Activated CD8-positive, alpha-beta T cell treated with anti-CD3 and anti-CD28 coated beads for 36 hours (primary cell): ENCODE measurements at regions of chr11 and their contacts with region 1.

Region 1: DNA sequence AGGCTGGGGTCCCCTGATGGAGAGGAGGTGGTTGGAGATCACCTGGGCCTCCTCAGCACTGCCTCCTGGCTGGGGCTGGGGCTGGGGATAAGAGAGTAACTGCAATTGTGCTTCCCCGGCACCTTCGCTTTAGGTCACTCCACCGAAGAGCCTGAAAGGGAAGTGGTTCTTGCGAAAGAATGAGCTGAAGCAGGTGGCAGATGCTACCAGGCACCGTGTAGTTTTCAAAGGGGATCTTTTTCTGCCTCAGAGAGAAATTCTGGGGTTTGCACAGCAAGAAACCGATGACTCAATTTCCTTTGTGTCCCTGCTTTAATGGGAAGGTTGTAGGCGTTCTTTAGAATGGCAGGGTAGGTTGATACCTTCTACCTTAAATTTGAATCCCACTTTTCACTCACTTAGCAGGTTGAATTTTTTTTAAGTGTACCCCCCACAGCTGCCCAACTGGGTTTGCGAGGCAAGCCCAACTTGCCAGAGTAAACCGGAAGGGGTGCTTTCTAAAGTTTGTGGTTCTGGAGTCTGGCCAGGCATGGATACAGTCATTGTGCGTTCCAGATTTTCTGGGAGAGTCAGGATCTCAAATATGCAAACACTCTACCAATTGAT is 5.3 kb downstream of the CD44 start:
- DNase-seq: peak; percentile 85
- ATAC-seq: peak; percentile 52
- H3K4me3 Mint-ChIP-seq: peak overlapping the region; percentile 93
- H3K27ac Mint-ChIP-seq: peak overlapping the region; percentile 97
- H3K4me1 Mint-ChIP-seq: peaks cover 66% of the 10 kb centered on the region
- H3K27me3 Mint-ChIP-seq: no peaks in the 10 kb centered on the region
- CTCF ChIP-seq: no peak

Region 2: DNA sequence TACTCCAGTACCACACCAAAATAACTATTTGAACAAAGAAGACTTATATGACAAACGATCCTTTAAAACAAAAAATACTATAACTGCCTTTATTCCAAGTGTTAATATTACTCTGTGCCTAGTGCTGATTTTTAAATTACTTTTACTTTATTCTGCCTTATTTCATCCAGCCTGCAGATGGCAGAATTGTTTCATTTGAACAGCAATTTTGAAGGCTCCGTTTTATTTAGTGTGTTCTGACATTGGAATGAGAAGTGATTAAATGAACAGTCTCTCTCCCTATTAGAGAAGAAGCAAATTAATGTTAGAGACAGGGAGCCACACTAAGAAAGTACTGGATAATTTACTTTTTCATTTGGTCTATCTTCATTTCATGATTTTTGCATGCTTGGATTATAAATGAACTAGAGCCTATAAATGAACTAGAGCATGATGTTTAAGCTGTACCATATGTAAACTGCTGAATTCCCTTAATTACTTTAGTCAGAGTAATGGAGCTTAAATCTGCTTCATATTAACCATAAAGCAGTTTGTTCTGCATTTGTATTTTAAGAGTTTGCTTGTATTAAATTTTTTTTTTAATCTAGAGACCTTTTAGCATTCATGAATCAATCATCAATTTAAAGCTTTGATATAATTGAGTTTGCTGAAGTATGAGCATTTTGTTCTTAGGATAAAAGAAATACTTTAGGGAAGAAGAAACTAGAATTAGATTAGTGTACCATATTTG is 218.0 kb before region 1 on chr11:
- CTCF ChIA-PET with region 1: interaction called, 5 read pairs
- POLR2A ChIA-PET with region 1: interaction called, 3 read pairs
- intact Hi-C with region 1: loop called (anchors 5 kb)
- DNase-seq: no peak
- ATAC-seq: peak; percentile 69
- H3K4me3 Mint-ChIP-seq: no peak overlapping the region
- H3K27ac Mint-ChIP-seq: no peak overlapping the region
- H3K4me1 Mint-ChIP-seq: peaks cover 18% of the 10 kb centered on the region
- H3K27me3 Mint-ChIP-seq: no peaks in the 10 kb centered on the region
- CTCF ChIP-seq: peak; percentile 84

Region 3: GRCh38 chr11:35013514-35014233 is 130.6 kb before region 1 on chr11:
- CTCF ChIA-PET with region 1: interaction called, 6 read pairs
- POLR2A ChIA-PET with region 1: interaction called, 16 read pairs
- intact Hi-C with region 1: no loop called
- DNase-seq: peak; percentile 48
- ATAC-seq: peak; percentile 70
- H3K4me3 Mint-ChIP-seq: peak overlapping the region; percentile 13
- H3K27ac Mint-ChIP-seq: peak overlapping the region; percentile 76
- H3K4me1 Mint-ChIP-seq: peaks cover 47% of the 10 kb centered on the region
- H3K27me3 Mint-ChIP-seq: peaks cover 2% of the 10 kb centered on the region
- CTCF ChIP-seq: no peak

Region 4: GRCh38 chr11:35082321-35083182 is 61.7 kb before region 1 on chr11:
- CTCF ChIA-PET with region 1: interaction called, 5 read pairs
- POLR2A ChIA-PET with region 1: interaction called, 6 read pairs
- intact Hi-C with region 1: loop called (anchors 5 kb)
- DNase-seq: peak; percentile 93
- ATAC-seq: peak; percentile 80
- H3K4me3 Mint-ChIP-seq: peak overlapping the region; percentile 58
- H3K27ac Mint-ChIP-seq: peak overlapping the region; percentile 89
- H3K4me1 Mint-ChIP-seq: peaks cover 80% of the 10 kb centered on the region
- H3K27me3 Mint-ChIP-seq: no peaks in the 10 kb centered on the region
- CTCF ChIP-seq: no peak

Region 5: GRCh38 chr11:35165423-35166368 is 21.5 kb after region 1 on chr11:
- CTCF ChIA-PET with region 1: interaction called, 94 read pairs
- POLR2A ChIA-PET with region 1: interaction called, 203 read pairs
- intact Hi-C with region 1: loop called (anchors 2 kb)
- DNase-seq: peak; percentile 96
- ATAC-seq: peak; percentile 67
- H3K4me3 Mint-ChIP-seq: peak overlapping the region; percentile 63
- H3K27ac Mint-ChIP-seq: peak overlapping the region; percentile 98
- H3K4me1 Mint-ChIP-seq: peaks cover 97% of the 10 kb centered on the region
- H3K27me3 Mint-ChIP-seq: no peaks in the 10 kb centered on the region
- CTCF ChIP-seq: no peak

Region 6: GRCh38 chr11:35223371-35223796 is 79.1 kb after region 1 on chr11:
- CTCF ChIA-PET with region 1: no interaction called
- POLR2A ChIA-PET with region 1: no interaction called
- intact Hi-C with region 1: no loop called
- DNase-seq: no peak
- ATAC-seq: no peak
- H3K4me3 Mint-ChIP-seq: no peak overlapping the region
- H3K27ac Mint-ChIP-seq: no peak overlapping the region
- H3K4me1 Mint-ChIP-seq: peaks cover 17% of the 10 kb centered on the region
- H3K27me3 Mint-ChIP-seq: no peaks in the 10 kb centered on the region
- CTCF ChIP-seq: no peak

Region 7: DNA sequence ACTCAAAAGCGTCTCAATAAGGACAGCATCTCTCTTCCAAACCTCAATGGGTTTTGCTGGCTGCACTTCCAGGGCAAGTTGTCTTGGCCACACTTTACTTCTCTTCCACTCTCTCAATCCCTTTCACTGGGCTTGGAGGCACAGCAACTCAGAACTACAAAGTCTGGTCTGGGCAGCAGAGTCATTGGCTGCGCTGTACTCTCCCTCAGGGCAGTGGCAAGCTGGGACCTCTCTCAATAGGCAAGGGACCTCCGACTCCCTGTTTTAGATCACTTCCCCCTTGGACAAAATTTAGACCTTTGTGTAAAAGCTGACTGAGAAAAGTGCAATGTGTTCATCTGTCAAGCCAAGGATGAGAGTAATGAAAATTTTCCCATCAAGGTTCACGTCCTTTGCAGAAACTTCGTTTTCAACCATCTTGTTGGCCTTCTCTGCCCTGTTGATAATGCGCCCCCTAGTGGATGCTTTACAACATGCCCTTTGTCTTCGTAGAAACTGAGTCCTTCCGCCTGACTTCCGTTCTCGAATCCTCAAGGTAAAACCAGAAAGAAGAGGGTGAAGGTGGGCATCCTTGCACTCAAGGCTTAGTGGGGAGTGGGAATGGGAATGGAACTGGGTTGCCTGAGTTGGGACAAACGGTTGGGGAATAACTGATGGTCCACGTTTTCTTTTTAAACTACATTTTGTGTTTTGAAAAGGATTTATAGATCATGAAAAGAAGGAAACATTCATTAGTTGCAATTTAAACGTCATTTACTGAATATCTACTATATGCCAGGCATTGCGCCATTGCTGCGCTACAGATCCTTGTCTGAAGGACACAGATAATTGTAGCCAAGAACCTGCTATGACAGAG is 93.8 kb after region 1 on chr11:
- CTCF ChIA-PET with region 1: interaction called, 4 read pairs
- POLR2A ChIA-PET with region 1: interaction called, 5 read pairs
- intact Hi-C with region 1: loop called (anchors 5 kb)
- DNase-seq: peak; percentile 70
- ATAC-seq: no peak
- H3K4me3 Mint-ChIP-seq: no peak overlapping the region
- H3K27ac Mint-ChIP-seq: no peak overlapping the region
- H3K4me1 Mint-ChIP-seq: peaks cover 79% of the 10 kb centered on the region
- H3K27me3 Mint-ChIP-seq: no peaks in the 10 kb centered on the region
- CTCF ChIP-seq: peak; percentile 88